Aorta (tissue), 5 donors: ENCODE measurements at regions of chr20 and their contacts with region 1.

Region 1: DNA sequence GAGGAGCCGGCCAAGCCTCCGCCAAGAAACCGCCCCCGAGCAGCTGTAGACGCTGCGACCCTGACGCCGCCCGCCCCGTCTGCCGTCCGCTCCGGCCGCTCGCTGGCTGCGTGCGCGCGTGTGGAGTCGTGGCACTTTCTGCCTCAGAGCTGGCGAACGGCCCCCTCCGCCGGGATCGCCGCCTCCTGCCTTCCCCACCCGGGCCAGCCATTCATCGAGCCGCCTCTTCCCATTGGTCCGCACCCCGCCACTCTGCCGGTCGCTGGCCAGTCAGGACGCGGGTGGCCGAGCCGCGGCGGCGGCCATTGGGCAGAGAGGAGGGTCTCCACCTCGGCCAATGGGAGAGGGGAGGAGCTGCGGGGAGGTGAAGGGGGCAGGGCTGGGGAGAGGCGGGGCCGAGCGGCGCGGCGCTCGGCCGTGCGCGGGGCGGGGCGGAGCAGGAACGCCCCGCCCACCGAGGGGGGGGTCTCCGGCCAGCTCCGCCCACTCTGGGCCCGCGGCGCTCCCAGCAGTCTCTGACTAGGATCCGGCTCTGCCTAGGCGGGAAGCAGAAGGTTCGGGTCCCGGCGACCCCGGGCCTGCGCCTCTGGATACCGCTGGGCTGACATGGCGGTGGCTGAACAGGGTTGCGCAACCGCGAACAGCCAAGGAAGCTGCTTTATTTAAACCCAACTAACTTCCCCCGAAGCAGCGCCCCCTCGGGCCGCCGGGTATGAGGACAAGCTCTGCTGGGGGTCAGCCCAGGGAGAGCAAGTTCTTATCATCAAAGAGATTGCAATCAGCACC is at the start of gene RRBP1:
- DNase-seq: peak; percentile 99
- ATAC-seq: peak; percentile 97
- H3K4me3 ChIP-seq: peak within 1 kb of the TSS; percentile 81 to 95
- H3K27ac ChIP-seq: peak within 1 kb of the TSS; percentile 88
- H3K4me1 ChIP-seq: no peaks in the 10 kb centered on the region
- H3K27me3 ChIP-seq: no peaks in the 10 kb centered on the region
- total RNA-seq, gene RRBP1: 165 to 178 TPM

Region 2: DNA sequence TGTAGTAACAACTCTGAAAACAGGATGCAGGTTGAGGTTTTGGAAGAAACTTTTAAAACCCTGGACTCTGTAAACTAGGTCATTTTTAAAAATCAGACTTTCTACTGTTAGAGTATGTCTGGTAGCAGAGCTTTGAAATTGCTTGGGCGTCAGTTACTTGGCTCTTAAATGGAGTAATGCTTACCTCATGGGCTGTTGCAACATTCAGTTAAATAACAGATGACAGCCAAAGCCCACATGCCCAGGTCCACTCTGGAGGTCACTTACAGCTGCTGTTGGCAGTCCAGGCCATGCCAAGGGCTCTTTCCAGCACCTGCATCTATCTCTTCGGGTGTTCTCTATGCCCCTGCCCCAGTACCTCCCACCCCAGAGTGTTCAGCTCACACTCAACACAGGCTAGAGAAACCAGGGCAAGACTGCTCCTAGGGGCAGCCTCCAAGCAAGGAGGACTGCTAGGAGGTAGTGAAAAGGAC is 113.8 kb after region 1 on chr20:
- intact Hi-C with region 1: loop called in 1 of 2 experiments (anchors 5 kb)
- DNase-seq: peak in 1 of 2 donors; percentile 73
- ATAC-seq: peak; percentile 90
- H3K4me3 ChIP-seq: no peak overlapping the region
- H3K27ac ChIP-seq: peak overlapping the region; percentile 35 to 50
- H3K4me1 ChIP-seq: no peaks in the 10 kb centered on the region
- H3K27me3 ChIP-seq: no peaks in the 10 kb centered on the region

Region 3: DNA sequence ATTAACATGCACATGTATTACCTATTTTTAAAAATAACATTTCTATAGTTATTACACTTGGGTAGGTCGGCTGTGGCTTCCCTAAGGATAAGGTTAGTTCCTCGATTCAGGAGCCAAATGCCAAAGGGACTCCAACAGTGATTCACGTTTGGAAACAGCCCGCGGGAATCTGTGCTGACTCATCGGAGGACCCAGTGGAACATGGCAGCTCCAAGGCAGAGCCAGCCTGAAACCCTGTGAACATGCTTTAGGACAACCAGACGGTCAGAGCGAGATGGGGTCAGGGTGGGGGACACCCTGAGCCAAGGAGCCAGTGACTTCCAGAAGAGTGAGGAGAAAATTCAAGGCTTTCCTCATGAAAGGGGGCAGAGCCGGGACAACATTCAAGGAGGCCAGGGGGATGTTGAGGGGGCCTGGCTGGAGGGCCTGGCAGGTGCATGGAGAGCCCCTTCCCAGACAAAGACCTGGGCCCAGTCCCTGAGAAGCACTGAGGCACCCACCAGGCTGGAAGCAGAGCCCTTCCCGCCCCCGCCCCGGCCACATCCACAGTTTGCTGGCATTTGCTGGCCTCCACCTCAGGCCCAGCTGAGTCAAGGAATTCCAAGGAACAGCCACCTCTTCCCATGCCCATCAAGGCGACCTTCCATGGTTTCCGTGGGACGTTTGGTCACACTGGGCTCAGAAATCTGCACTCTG is 153.1 kb after region 1 on chr20:
- intact Hi-C with region 1: loop called in 1 of 2 experiments (anchors 5 kb)
- DNase-seq: peak; percentile 85 to 92
- ATAC-seq: peak; percentile 63
- H3K4me3 ChIP-seq: no peak overlapping the region
- H3K27ac ChIP-seq: peak overlapping the region in 1 of 2 donors; percentile 57
- H3K4me1 ChIP-seq: peaks cover 0 to 1% of the 10 kb centered on the region in 2 donors
- H3K27me3 ChIP-seq: no peaks in the 10 kb centered on the region

Region 4: DNA sequence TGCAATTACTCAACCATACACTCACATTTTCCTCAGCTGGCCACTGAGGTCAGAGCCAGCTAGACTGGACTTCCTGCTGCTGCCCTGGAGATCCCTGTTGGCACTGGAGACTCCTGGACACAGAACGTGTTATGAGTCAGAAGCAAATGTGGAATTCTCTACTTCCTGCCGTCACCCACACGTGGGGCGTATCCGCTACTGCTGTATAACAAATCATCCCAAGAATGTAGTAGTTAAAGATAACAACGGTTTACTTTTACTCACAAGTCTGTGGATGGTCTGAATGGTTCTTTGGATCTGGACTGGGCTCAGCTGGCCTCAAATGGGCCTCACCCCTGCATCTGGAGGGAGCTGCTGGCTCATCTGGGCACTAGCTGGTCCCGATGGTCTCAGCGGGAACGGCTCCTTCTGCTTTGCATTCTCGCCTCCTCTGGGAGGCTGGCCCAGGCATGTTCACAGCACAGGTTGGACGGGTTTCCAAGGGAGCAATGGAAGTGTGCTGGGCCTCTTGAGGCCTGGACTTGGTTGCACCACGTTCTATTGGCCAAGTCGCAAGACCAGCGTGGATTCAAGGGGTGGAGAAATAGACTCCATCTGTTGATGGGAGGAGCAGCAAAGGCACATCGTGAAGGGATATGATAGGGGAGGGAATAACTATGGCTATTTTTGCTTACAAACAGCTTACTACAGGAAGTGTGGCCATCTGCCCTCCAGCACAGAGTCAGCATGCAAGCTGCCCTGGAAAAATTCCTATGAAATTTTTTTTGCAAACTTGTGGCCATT is 167.8 kb after region 1 on chr20:
- intact Hi-C with region 1: loop called (anchors 5 kb)
- DNase-seq: peak; percentile 91 to 93
- ATAC-seq: peak; percentile 90
- H3K4me3 ChIP-seq: no peak overlapping the region
- H3K27ac ChIP-seq: peak overlapping the region; percentile 3 to 97
- H3K4me1 ChIP-seq: no peaks in the 10 kb centered on the region
- H3K27me3 ChIP-seq: no peaks in the 10 kb centered on the region

Region 5: GRCh38 chr20:17968366-17969279 is 286.3 kb after region 1 on chr20 and contains the starts of genes MGME1 and SNX5:
- intact Hi-C with region 1: loop called in 1 of 2 experiments (anchors 5 kb)
- DNase-seq: peak; percentile 100
- ATAC-seq: peak; percentile 99
- H3K4me3 ChIP-seq: peak within 1 kb of the TSS; percentile 64 to 93
- H3K27ac ChIP-seq: peak within 1 kb of the TSS; percentile 12 to 87
- H3K4me1 ChIP-seq: no peaks in the 10 kb centered on the region
- H3K27me3 ChIP-seq: no peaks in the 10 kb centered on the region
- total RNA-seq, gene MGME1: 10.8 to 14.7 TPM
- total RNA-seq, gene SNX5: 51.2 to 70.9 TPM